RWPE1 (cell line): ENCODE measurements at regions of chr3 and their contacts with region 1.

Region 1: GRCh38 chr3:156151824-156152428 is 31.5 kb downstream of the KCNAB1 start:
- DNase-seq: peak; percentile 49
- H3K27ac ChIP-seq: no peak overlapping the region
- CTCF ChIP-seq: peak; percentile 78

Region 2: DNA sequence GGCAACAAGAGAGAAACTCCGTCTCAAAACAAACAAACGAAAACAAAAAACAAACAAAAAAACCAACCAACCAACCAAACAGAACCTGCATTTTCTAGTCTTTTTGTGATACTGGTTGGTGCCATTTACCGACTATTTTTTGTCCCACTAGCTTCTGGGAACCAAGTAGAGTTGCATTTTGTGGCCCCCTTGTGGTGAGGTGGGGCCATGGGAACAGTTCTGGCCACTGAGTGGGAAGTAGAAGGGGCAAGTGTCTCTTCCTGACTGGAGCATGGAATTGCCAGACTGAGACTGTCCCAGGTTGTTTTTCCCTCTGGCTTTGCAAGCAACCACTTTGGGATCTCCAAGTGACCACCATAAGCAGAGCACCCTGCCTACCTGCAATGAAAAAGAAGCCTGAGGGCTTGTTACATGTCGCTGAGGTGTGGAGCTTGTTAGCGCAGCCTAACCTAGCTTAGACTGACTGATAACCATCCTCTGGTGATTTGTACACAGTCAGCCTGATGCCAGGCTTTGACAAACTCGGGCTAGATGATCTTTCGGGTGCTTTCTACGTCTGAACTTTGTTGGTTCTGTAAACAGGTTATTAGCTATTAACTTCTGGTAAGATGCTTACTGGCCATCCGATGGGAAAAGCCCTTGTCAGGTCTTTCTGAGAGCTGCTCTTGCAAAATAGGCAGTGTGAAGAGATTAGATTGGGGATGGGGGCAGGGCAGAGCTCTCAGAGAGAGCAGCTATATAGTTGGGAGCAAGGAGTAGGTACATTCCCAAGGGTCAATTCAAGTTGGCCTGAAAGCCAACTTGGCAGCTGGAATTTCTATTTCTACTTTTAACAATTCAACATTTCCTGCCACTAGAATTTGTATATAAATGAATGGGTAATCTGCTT is 230.8 kb after region 1 on chr3:
- CTCF ChIA-PET with region 1: interaction called, 14 read pairs
- POLR2A ChIA-PET with region 1: no interaction called
- DNase-seq: peak; percentile 45
- H3K27ac ChIP-seq: no peak overlapping the region
- CTCF ChIP-seq: peak; percentile 52

Region 3: GRCh38 chr3:156509189-156510174 is 357.6 kb after region 1 on chr3:
- CTCF ChIA-PET with region 1: interaction called, 27 read pairs
- POLR2A ChIA-PET with region 1: no interaction called
- DNase-seq: peak; percentile 56
- H3K27ac ChIP-seq: no peak overlapping the region
- CTCF ChIP-seq: peak; percentile 61

Region 4: GRCh38 chr3:156536524-156537231 is 384.8 kb after region 1 on chr3:
- CTCF ChIA-PET with region 1: interaction called, 12 read pairs
- POLR2A ChIA-PET with region 1: no interaction called
- DNase-seq: no peak
- H3K27ac ChIP-seq: no peak overlapping the region
- CTCF ChIP-seq: no peak